Left colon (tissue), 2 donors: ENCODE measurements at regions of chr19 and their contacts with region 1.

Region 1: DNA sequence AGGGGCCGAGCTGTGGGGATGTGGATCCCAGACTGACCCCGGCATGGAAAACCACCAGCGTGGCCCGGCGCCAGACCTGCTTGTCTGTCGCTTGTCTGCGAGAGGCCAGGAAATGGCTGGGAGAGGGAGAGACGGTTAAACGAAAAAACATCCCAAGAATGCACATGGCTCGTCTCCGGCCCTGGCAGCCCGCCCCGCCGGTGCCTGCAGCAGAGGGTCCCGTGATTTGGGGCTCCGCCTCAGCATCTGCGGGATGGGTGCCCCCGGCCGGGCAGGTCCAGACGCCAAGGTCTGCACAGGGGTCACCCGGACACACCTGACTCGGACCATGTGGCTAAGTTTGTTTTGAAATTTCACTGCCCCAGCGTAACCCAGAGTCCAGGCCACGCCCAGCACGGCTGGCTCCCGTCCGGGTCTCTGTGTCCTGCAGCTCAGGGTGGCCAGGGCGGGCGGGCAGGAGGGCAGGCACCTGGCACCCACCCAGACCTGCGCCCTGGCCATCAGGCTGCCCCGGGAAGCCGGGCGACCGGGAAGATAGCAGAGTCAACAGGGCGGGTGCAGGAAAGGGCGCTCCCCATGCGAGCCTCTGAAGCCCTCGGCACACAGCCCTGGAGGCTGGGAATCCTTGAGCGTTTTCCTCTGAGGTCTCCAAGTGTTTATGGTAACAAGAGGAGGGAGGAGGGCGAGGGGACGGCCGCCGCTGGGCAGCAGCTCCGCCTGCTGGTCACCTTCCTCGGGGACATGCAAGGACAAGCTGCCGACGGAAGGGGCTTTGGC is 103.2 kb downstream of the GADD45B start:
- DNase-seq: peak; percentile 85 to 90
- ATAC-seq: peak; percentile 78

Region 2: DNA sequence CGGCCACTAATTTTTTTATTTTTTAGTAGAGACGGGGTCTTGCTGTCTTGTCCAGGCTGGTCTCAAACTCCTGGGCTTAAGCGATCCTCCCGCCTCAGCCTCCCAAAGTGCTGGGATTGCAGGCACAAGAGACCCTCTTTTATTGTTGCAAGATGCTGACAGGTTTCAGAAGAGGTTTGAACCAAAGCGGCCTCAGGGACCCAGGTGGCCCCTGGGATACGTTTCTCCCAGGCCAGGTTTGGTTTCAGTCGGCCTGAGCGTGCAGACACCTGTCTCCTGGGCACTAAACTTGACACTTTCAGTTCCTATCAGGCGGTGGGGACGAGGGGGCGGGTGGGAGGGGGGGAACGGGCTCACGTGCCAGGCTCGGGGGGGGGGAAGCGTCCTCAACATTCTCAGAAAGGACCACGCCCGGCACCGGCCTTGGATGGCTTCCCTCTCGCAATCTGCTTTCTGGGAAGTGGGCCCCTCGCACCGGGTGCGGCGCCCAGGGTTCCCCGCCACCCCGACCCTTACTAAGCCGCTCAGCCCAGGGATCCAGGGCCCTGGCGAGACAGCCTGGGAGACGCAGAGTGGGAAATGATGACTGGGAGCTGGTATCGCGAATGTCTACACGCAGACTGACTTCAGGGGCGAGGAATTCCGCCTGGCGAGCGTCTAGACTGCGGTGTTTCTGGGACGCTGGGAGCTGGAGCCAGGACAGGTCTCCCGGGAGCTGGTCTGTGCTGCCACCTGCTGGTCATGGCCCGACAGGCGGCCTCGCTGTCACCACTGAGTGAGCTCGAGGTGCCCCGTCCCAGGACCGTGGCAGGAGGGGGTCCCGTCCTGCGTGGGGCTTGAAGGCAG is 31.8 kb after region 1 on chr19:
- intact Hi-C with region 1: loop called in 1 of 2 experiments (anchors 5 kb)
- DNase-seq: peak; percentile 89 to 97
- ATAC-seq: peak; percentile 95

Region 3: DNA sequence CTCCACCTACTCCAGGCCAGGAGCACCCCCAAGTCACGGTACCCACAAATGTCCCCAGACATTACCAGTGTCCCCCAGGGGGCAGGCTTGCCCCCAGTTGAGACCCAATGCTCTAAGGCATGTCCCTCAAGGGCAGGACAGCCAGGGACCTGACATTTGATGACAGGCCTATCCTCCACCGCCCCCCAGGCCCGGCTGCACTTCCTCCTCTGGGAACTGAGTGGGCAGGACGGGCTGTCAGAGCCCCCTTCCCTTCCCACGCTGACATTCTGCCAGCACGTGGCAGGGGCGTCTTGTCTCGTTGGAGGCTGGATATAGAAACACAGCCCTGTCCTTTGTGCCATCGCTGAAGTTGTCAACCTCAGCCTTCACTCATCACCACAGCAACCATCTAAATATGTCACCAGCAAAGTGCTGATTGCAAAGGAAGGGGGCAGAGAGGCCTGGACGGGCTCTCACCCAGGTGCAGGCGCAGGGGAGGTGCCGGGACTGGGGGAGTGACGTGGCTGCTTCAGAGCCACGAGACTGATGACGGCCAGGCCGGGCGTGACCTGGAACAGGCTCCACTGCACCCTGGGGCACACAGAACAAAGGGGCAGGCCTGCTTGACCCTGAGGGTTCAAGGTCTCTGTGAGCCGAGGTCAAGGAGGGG is 85.0 kb after region 1 on chr19:
- intact Hi-C with region 1: no loop called
- DNase-seq: peak; percentile 41 to 65
- ATAC-seq: peak; percentile 22